HCT116 (cell line): ENCODE measurements at regions of chr5 and their contacts with region 1.

Region 1: GRCh38 chr5:129767906-129768380 is 20.0 kb downstream of the MINAR2 start:
- DNase-seq: peak; percentile 92
- ATAC-seq: peak; percentile 91
- H3K4me3 ChIP-seq: no peak overlapping the region
- H3K27ac ChIP-seq: no peak overlapping the region
- H3K4me1 ChIP-seq: no peaks in the 10 kb centered on the region; a peak in 1 of 4 replicates
- H3K27me3 ChIP-seq: no peaks in the 10 kb centered on the region
- CTCF ChIP-seq: peak; percentile 96 to 99 (median 99)
- POLR2A ChIP-seq: no peak
- RAD21 ChIP-seq: peak; percentile 99

Region 2: DNA sequence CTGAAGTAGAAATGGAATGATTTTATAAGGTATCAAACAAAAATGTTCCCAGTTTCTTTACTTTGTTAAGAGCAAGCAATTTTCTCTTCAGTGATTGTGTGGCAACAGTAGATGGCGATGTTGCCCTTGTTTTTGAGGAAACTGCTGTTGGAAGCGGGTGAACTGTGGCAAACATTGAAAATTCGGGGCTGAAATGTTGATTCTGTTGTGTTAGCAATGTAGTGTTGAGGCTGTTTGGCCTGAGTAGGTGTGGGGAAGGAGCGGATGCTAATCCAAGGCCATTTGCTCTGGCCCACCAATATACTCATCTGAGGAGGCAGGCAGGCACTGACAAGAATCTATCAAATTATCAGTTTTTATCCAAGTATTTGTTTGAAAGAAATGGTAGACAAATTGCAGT is 1554.6 kb before region 1 on chr5:
- CTCF ChIA-PET with region 1: no interaction called
- POLR2A ChIA-PET with region 1: no interaction called
- RAD21 ChIA-PET with region 1: no interaction called
- intact Hi-C with region 1: loop called (anchors 5 kb)
- DNase-seq: peak; percentile 61
- ATAC-seq: peak; percentile 76
- H3K4me3 ChIP-seq: no peak overlapping the region
- H3K27ac ChIP-seq: no peak overlapping the region
- H3K4me1 ChIP-seq: no peaks in the 10 kb centered on the region
- H3K27me3 ChIP-seq: no peaks in the 10 kb centered on the region
- CTCF ChIP-seq: peak; percentile 66 to 87 (median 78); a peak in 5 of 6 replicates
- POLR2A ChIP-seq: no peak
- RAD21 ChIP-seq: peak; percentile 92

Region 3: DNA sequence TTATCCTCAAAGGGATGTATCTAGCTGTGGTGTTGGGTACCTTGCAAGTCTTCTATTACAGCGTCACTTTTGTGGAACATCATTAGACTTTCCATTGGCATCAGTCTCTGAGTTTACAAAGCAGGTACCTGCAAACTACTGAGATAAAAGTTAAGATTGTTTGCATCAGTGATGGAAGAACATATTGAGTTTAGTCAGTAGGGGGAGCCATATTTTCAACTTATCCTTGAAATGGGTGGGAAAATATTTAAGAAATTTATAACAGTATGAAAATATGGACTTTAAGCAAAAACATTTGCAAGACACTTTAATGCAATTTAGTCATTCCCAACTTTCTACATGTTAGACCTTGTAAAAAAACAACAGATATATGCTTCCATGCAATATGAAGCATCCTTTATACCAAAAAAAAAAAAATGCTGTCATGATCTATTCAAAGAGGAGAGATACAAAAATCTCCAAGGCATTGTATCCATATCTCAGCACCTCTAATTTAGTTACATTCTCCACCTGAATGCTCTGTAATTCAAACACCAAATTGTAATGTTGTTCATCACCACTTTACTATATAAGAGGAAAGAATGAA is 406.4 kb before region 1 on chr5:
- CTCF ChIA-PET with region 1: no interaction called
- POLR2A ChIA-PET with region 1: no interaction called
- RAD21 ChIA-PET with region 1: no interaction called
- intact Hi-C with region 1: loop called (anchors 5 kb)
- DNase-seq: peak; percentile 15
- ATAC-seq: no peak; the same call in 1 of the 2 replicates
- H3K4me3 ChIP-seq: no peak overlapping the region
- H3K27ac ChIP-seq: no peak overlapping the region
- H3K4me1 ChIP-seq: no peaks in the 10 kb centered on the region
- H3K27me3 ChIP-seq: no peaks in the 10 kb centered on the region
- CTCF ChIP-seq: peak; percentile 48 to 70 (median 51); a peak in 5 of 6 replicates
- POLR2A ChIP-seq: no peak
- RAD21 ChIP-seq: peak; percentile 54

Region 4: GRCh38 chr5:129652349-129653069 is 115.4 kb before region 1 on chr5:
- CTCF ChIA-PET with region 1: no interaction called
- POLR2A ChIA-PET with region 1: no interaction called
- RAD21 ChIA-PET with region 1: no interaction called
- intact Hi-C with region 1: no loop called
- DNase-seq: no peak
- ATAC-seq: no peak
- H3K4me3 ChIP-seq: no peak overlapping the region
- H3K27ac ChIP-seq: no peak overlapping the region
- H3K4me1 ChIP-seq: no peaks in the 10 kb centered on the region
- H3K27me3 ChIP-seq: no peaks in the 10 kb centered on the region
- CTCF ChIP-seq: no peak
- POLR2A ChIP-seq: no peak
- RAD21 ChIP-seq: no peak

Region 5: DNA sequence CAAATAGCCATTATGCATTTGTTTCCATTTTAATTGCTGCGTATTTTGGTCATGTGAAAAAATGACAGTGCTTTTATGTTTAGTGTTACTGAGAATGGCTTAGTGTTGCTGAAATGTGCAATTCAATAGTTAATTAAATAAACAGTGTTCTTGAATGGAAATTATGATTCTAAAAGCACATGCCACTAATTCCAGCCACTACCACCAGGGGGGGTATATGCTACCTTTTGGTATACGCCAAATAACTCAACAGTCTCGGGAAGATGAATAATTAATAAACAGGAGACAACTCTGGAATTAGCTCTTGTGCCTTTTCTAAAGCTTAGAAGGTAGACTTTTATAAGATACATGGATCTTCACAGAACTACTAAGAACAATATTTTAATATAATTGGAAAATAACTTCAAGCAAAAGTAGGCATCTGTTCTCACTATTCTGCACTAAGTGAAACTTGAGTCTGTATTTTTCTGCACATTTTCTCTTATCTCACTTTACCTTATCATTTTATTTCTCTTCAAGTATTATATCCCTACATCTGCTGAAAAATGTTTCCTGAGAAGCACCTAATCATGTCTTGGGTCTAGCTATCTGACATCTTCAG is 103.5 kb before region 1 on chr5:
- CTCF ChIA-PET with region 1: interaction called, 11 read pairs
- POLR2A ChIA-PET with region 1: no interaction called
- RAD21 ChIA-PET with region 1: no interaction called
- intact Hi-C with region 1: loop called (anchors 5 kb)
- DNase-seq: peak; percentile 39
- ATAC-seq: peak; percentile 62; the same call in 1 of the 2 replicates
- H3K4me3 ChIP-seq: no peak overlapping the region
- H3K27ac ChIP-seq: no peak overlapping the region
- H3K4me1 ChIP-seq: no peaks in the 10 kb centered on the region
- H3K27me3 ChIP-seq: no peaks in the 10 kb centered on the region
- CTCF ChIP-seq: peak; percentile 67 to 91 (median 81); a peak in 5 of 6 replicates
- POLR2A ChIP-seq: no peak
- RAD21 ChIP-seq: peak; percentile 54

Region 6: DNA sequence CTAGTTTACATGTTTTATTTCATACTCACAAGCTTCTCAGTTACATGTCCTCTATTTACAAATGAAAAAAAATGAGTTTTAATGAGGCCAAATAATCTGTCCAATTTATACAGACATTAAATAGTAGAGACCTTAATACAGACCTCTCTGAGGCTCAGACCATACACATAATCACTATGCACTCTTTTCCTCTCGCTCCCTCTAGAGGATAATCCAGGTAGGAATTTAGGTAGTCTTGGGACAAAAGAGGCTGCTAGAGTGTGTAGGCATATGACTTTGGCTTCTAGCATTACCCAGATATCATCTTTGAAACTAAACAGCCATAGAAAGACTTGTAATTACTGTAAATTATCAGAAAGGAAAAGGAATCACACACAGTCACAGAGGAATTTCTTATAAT is 952.4 kb after region 1 on chr5:
- CTCF ChIA-PET with region 1: no interaction called
- POLR2A ChIA-PET with region 1: no interaction called
- RAD21 ChIA-PET with region 1: no interaction called
- intact Hi-C with region 1: loop called (anchors 10 kb)
- DNase-seq: peak; percentile 45
- ATAC-seq: peak; percentile 100
- H3K4me3 ChIP-seq: no peak overlapping the region
- H3K27ac ChIP-seq: no peak overlapping the region
- H3K4me1 ChIP-seq: no peaks in the 10 kb centered on the region
- H3K27me3 ChIP-seq: no peaks in the 10 kb centered on the region
- CTCF ChIP-seq: peak; percentile 56 to 74 (median 69); a peak in 5 of 6 replicates
- POLR2A ChIP-seq: no peak
- RAD21 ChIP-seq: peak; percentile 88

Region 7: DNA sequence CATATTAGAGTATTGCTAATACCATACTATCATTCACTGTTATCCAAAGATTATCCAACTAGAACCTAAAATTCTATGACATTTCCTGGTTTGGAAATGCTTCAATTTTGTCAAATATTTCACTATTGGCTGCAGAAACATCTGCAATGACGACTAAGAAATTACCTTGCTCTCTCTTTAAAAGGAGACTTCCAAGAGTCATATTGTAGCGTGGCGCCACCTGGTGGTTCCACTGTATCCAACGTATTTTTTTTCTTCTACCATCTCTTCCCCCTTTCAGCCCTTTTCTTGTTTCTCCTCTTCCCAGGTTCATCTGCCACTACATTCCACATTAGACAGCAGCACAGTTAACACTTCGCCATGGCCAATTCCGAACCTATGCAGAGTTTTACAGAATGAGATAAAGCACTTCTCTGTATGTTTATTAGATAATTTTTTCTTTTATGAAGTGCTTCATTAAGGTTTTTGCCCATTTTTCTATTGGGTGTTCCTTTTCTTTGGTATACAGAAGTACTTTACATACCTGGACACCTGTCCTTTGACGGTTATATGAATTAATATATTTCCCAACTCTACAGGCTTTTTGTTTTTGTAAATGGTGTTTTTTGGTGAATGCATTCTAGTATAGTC is 1649.4 kb after region 1 on chr5:
- CTCF ChIA-PET with region 1: no interaction called
- POLR2A ChIA-PET with region 1: no interaction called
- RAD21 ChIA-PET with region 1: no interaction called
- intact Hi-C with region 1: loop called (anchors 1 kb)
- DNase-seq: peak; percentile 37
- ATAC-seq: peak; percentile 72
- H3K4me3 ChIP-seq: no peak overlapping the region
- H3K27ac ChIP-seq: no peak overlapping the region
- H3K4me1 ChIP-seq: no peaks in the 10 kb centered on the region
- H3K27me3 ChIP-seq: no peaks in the 10 kb centered on the region
- CTCF ChIP-seq: peak; percentile 60 to 91 (median 74); a peak in 5 of 6 replicates
- POLR2A ChIP-seq: no peak
- RAD21 ChIP-seq: peak; percentile 77